Endothelial cell of umbilical vein (primary cell): ENCODE measurements at regions of chr3 and their contacts with region 1.

Region 1: DNA sequence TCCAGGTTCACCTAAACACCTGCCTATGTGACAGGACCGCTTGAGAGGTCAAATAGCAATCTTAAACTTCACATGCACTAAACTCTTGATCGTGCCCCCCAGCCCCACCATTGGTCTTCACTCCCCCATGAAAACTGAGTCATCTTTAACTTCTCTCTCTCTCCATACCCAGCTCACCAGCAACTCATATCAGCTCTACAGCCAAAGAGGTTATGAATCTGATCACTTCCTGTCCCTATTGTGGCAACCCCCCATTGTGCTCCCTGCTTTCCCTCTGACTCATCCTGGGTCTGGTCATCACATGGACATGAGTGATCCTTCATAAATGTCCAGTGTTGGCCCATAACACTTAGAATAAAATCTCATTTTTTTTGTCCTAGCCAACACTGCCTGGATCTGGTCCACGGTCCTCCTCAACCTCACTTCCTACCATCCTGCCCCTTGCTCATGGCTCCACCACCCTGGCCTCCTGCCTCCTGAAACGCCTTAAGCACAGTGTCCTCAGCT is 103.4 kb upstream of the HACD2 start:
- DNase-seq: peak; percentile 82
- H3K4me3 ChIP-seq: no peak overlapping the region
- H3K27ac ChIP-seq: peak overlapping the region; percentile 77
- H3K4me1 ChIP-seq: peaks cover 39% of the 10 kb centered on the region
- H3K27me3 ChIP-seq: no peaks in the 10 kb centered on the region
- CTCF ChIP-seq: no peak
- POLR2A ChIP-seq: no peak

Region 2: GRCh38 chr3:122484985-122485384 is 1203.3 kb before region 1 on chr3:
- CTCF ChIA-PET with region 1: no interaction called
- POLR2A ChIA-PET with region 1: no interaction called
- dilution Hi-C with region 1: no loop called
- intact Hi-C with region 1: loop called (anchors 10 kb)
- DNase-seq: no peak
- H3K4me3 ChIP-seq: no peak overlapping the region
- H3K27ac ChIP-seq: no peak overlapping the region
- H3K4me1 ChIP-seq: peaks cover 16% of the 10 kb centered on the region
- H3K27me3 ChIP-seq: no peaks in the 10 kb centered on the region
- CTCF ChIP-seq: no peak
- POLR2A ChIP-seq: no peak

Region 3: DNA sequence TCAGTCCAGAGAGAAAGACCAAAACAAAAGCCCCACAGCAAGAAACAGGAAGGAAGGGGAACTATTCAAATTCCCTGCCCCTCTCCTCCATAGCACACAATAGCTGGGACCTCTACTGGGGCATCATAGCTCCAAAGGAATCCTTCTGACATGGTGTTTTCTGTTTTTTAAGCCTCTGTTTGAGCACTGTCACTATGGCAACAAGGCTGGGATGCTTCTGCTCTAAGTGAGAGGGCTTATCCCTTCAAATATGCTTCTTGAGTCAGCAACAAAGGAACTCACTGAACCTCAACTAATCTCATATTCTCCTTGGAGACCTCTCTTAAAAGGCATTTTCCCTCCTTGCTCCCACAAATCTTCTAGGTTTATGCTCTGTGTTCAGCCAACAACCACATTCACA is 155.4 kb after region 1 on chr3:
- CTCF ChIA-PET with region 1: no interaction called
- POLR2A ChIA-PET with region 1: no interaction called
- dilution Hi-C with region 1: no loop called
- intact Hi-C with region 1: no loop called
- DNase-seq: no peak
- H3K4me3 ChIP-seq: no peak overlapping the region
- H3K27ac ChIP-seq: no peak overlapping the region
- H3K4me1 ChIP-seq: peaks cover 5% of the 10 kb centered on the region
- H3K27me3 ChIP-seq: no peaks in the 10 kb centered on the region
- CTCF ChIP-seq: no peak
- POLR2A ChIP-seq: no peak